AG04450 (cell line): ENCODE measurements at regions of chr9 and their contacts with region 1.

Region 1: GRCh38 chr9:129451089-129452025 is 169.5 kb downstream of the C9orf50 start:
- DNase-seq: no peak
- H3K4me3 ChIP-seq: no peak overlapping the region
- H3K27ac ChIP-seq: no peak overlapping the region
- H3K27me3 ChIP-seq: no peaks in the 10 kb centered on the region
- CTCF ChIP-seq: no peak

Region 2: GRCh38 chr9:129370770-129371169 is 80.6 kb before region 1 on chr9:
- CTCF ChIA-PET with region 1: no interaction called
- POLR2A ChIA-PET with region 1: no interaction called
- DNase-seq: no peak
- H3K4me3 ChIP-seq: no peak overlapping the region
- H3K27ac ChIP-seq: no peak overlapping the region
- H3K27me3 ChIP-seq: no peaks in the 10 kb centered on the region
- CTCF ChIP-seq: no peak

Region 3: GRCh38 chr9:129382281-129383018 is 68.9 kb before region 1 on chr9:
- CTCF ChIA-PET with region 1: no interaction called
- POLR2A ChIA-PET with region 1: no interaction called
- DNase-seq: no peak
- H3K4me3 ChIP-seq: no peak overlapping the region
- H3K27ac ChIP-seq: no peak overlapping the region
- H3K27me3 ChIP-seq: peaks cover 9% of the 10 kb centered on the region
- CTCF ChIP-seq: no peak

Region 4: GRCh38 chr9:129489838-129490582 is 38.7 kb after region 1 on chr9:
- CTCF ChIA-PET with region 1: no interaction called
- POLR2A ChIA-PET with region 1: interaction called, 10 read pairs
- DNase-seq: no peak
- H3K4me3 ChIP-seq: peak overlapping the region; percentile 52
- H3K27ac ChIP-seq: peak overlapping the region; percentile 99
- H3K27me3 ChIP-seq: no peaks in the 10 kb centered on the region
- CTCF ChIP-seq: no peak